Heart right ventricle (tissue), 16 donors: ENCODE measurements at regions of chr6 and their contacts with region 1.

Region 1: DNA sequence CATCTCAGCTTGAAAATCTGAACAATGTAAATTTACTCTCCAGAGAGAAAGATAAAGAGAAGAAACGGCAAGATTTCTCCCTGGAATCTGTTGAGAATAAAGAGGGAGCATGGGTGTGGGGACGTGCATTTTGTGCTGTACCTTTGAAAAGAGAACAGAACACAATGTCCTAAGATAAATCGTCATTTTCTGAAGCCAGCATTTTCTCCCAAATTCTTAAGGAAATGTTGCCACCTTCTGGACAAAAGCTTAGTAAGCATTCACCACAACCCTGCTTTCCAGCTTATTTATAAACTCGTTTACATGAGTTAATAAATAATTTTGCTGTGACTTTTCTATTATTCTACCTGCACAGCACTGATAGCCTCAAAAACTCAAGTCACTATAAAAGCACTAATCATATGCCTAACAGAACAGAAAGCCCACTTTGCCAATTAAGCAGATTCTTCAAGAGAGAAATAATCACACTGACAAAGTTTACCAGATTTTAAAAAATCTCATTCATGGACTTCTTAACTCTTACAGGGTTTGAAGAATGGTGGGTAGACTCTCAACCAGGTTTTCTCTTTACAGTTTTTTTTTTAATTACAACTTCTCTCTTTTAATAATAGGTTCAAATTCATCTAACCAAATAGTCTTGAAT is 155.8 kb downstream of the MBOAT1 start:
- DNase-seq: no peak
- ATAC-seq: peak in 1 of 8 donors; percentile 66
- H3K4me3 ChIP-seq: no peak overlapping the region
- H3K27ac ChIP-seq: no peak overlapping the region
- H3K4me1 ChIP-seq: no peaks in the 10 kb centered on the region
- H3K27me3 ChIP-seq: no peaks in the 10 kb centered on the region
- CTCF ChIP-seq: peak in 8 of 9 donors; percentile 21 to 63 (median 56)

Region 2: DNA sequence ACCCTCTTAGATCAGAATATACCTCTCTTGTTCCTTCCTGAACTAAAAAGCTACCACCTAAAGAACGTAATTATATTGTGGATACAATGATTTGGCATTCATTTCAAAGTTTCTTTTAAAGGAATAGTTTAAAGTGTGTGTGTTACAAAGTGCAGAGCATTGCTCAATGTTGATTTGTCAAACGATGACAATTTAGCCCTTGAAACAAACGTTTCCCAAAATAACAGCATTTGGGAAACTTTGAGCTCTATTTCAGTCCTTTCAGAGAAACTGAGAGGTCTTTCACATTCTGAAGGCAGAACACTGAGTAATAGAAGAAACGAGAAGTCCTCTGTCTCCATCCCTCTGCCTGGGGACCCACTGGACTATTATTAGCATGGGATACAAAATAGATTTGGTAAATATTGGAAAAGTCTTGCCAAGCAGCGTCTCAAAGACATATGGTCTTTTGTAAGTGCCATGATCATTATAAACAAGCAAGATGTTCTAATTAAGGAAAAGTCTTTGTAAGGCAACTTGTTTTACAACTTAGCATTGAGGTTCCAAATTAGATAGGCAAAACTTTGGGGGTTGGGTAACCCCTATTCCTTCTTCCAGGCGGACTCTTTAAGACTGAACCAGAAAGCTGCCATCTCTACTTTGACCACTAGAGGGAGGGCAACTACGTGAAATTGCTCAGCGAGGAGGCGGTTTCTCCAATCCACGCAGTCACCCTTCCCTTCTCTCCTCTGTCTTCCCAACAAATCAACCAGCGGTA is 1460.5 kb before region 1 on chr6:
- intact Hi-C with region 1: loop called (anchors 2 to 10 kb)
- DNase-seq: peak in 1 of 2 donors; percentile 63
- ATAC-seq: peak; percentile 77 to 91 (median 80)
- H3K4me3 ChIP-seq: no peak overlapping the region
- H3K27ac ChIP-seq: no peak overlapping the region
- H3K4me1 ChIP-seq: peaks cover 0 to 5% (median 0%) of the 10 kb centered on the region in 9 donors
- H3K27me3 ChIP-seq: peaks cover 0 to 11% (median 0%) of the 10 kb centered on the region in 7 donors
- CTCF ChIP-seq: peak; percentile 74 to 95 (median 89)

Region 3: GRCh38 chr6:18748314-18748713 is 1308.2 kb before region 1 on chr6:
- intact Hi-C with region 1: loop called in 1 of 10 experiments (anchors 5 kb)
- DNase-seq: no peak
- ATAC-seq: no peak
- H3K4me3 ChIP-seq: no peak overlapping the region
- H3K27ac ChIP-seq: no peak overlapping the region
- H3K4me1 ChIP-seq: peaks cover 0 to 5% (median 0%) of the 10 kb centered on the region in 9 donors
- H3K27me3 ChIP-seq: peaks cover 0 to 4% (median 0%) of the 10 kb centered on the region in 7 donors
- CTCF ChIP-seq: no peak

Region 4: DNA sequence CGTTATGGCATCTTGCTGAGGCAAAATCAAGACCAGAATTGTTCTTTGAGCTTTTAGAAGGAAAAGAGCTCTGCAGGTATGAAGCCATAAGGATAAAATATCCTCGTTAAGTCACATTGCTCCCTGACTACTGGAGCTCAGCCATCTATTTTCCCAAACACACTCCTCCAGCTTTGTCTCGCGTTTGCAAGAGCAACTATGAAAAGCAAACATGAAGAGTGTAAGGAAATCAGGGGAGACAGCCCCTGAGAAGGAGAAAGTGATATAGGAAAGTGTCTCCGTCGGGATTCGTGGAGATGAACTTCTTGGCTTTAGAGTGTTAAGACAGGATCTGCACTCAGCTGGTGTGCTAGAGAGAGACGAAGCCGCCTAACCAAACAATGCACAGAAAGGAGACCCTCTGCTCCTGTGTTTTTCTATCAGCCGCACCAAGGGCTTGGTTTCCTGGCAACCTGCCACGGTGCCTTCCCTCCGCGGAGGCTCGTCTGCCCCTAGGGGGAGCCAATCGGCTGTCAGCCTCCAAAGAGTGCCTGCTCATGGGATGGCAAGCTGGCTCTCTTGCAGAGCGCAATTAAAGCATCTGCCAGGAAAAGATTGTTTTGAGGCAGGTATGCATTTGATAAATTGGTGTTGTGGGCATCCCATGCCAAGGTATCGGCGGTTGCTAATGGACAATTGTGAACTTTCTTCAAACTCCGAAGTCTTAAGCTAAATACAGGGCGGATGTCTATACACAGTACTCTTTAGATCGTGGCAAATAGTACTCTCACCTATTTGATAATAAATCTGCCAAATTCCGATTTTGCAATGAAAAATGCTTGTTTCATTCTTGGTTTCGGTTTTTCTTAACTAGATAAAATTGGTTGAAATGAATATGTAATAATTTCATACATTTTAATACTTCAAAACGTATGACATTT is 1066.2 kb before region 1 on chr6:
- intact Hi-C with region 1: loop called in 1 of 10 experiments (anchors 10 kb)
- DNase-seq: peak; percentile 60 to 72
- ATAC-seq: peak in 5 of 8 donors; percentile 43 to 65 (median 50)
- H3K4me3 ChIP-seq: peak overlapping the region in 3 of 10 donors; percentile 17 to 25 (median 17)
- H3K27ac ChIP-seq: no peak overlapping the region
- H3K4me1 ChIP-seq: peaks cover 0 to 9% (median 0%) of the 10 kb centered on the region in 9 donors
- H3K27me3 ChIP-seq: no peaks in the 10 kb centered on the region
- CTCF ChIP-seq: peak; percentile 26 to 76 (median 66)

Region 5: DNA sequence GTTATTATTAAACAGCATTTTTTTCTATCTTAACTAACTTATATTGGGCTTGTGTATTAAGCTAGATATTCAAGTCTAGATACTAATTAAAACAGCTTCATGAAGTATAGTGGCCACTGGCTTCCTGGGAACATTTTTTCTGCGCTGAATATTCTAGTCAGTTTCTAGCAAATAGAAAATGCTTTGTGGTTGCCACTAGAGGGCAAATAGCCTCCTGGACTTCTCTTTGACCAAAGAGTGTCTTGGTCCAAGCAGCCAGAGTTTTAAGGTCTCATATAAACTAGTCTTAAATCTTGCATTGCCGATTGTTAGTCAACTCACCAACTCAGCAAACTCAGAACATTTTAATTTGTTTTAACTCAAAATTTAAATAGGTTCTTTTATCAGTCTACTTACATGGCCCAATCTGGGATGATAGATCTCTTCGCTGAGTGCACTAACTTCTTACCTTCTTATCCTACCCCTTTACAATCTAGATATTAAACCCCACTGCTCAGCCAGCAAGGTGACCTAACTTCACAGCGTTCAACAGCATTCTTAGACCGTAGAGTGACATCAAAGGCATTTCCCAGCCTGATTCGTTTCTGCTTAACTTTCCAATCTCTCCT is 243.9 kb before region 1 on chr6:
- intact Hi-C with region 1: loop called in 3 of 10 experiments (anchors 5 to 10 kb)
- DNase-seq: no peak
- ATAC-seq: peak in 1 of 8 donors; percentile 67
- H3K4me3 ChIP-seq: no peak overlapping the region
- H3K27ac ChIP-seq: no peak overlapping the region
- H3K4me1 ChIP-seq: no peaks in the 10 kb centered on the region
- H3K27me3 ChIP-seq: peaks cover 0 to 5% (median 0%) of the 10 kb centered on the region in 7 donors
- CTCF ChIP-seq: peak; percentile 25 to 73 (median 58)

Region 6: GRCh38 chr6:20013066-20013861 is 43.2 kb before region 1 on chr6:
- intact Hi-C with region 1: no loop called
- DNase-seq: no peak
- ATAC-seq: no peak
- H3K4me3 ChIP-seq: no peak overlapping the region
- H3K27ac ChIP-seq: no peak overlapping the region
- H3K4me1 ChIP-seq: no peaks in the 10 kb centered on the region
- H3K27me3 ChIP-seq: peaks cover 0 to 2% (median 0%) of the 10 kb centered on the region in 7 donors
- CTCF ChIP-seq: no peak

Region 7: DNA sequence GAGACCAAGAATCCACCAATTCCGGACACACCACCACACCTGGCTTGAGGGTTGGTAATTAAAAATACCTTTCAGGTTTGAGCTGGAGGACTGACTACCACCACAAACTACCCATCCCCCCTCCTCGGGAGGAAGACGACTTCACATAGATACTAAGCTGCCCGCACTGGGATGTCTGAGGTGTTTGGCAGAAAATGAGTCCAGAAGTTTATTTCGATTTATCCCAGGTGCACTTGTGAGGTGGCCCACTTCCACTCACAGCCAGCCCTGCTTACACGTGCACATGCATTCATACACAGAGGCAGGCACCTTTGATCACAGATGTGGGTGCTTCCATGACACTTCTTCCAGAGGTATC is 32.2 kb before region 1 on chr6:
- intact Hi-C with region 1: no loop called
- DNase-seq: no peak
- ATAC-seq: no peak
- H3K4me3 ChIP-seq: peak overlapping the region in 1 of 10 donors; percentile 14
- H3K27ac ChIP-seq: no peak overlapping the region
- H3K4me1 ChIP-seq: no peaks in the 10 kb centered on the region
- H3K27me3 ChIP-seq: no peaks in the 10 kb centered on the region
- CTCF ChIP-seq: no peak